AG04450 (cell line): ENCODE measurements at regions of chr20 and their contacts with region 1.

Region 1: GRCh38 chr20:16821211-16822089 is 73.3 kb downstream of the OTOR start:
- DNase-seq: no peak
- H3K4me3 ChIP-seq: no peak overlapping the region
- H3K27ac ChIP-seq: no peak overlapping the region
- H3K27me3 ChIP-seq: peaks cover 3% of the 10 kb centered on the region
- CTCF ChIP-seq: peak; percentile 94

Region 2: GRCh38 chr20:16810216-16810615 is 11.2 kb before region 1 on chr20:
- CTCF ChIA-PET with region 1: interaction called, 140 read pairs
- POLR2A ChIA-PET with region 1: no interaction called
- DNase-seq: no peak
- H3K4me3 ChIP-seq: no peak overlapping the region
- H3K27ac ChIP-seq: no peak overlapping the region
- H3K27me3 ChIP-seq: no peaks in the 10 kb centered on the region
- CTCF ChIP-seq: no peak

Region 3: DNA sequence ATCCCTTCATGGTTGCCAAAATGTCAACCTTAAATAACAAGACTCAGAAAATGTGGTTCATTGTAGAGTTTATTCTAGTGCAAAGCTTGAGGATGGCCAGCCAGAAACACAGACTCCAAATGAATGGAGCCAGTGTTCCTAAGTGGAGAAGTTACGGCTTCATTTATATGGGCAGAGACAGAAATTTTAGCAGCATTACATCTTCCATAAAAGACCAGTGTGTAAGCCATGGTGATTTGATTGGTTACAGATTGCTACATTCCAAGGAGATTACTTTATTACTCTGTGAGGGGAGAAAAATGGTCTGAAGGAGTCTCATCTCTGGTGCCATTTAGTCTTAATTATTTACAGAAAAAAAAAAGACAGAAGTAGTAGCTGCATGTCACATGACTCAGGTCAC is 24.6 kb after region 1 on chr20:
- CTCF ChIA-PET with region 1: interaction called, 23 read pairs
- POLR2A ChIA-PET with region 1: no interaction called
- DNase-seq: no peak
- H3K4me3 ChIP-seq: no peak overlapping the region
- H3K27ac ChIP-seq: no peak overlapping the region
- H3K27me3 ChIP-seq: no peaks in the 10 kb centered on the region
- CTCF ChIP-seq: no peak